ENCODE measurements at regions of chr10 and their contacts with region 1.

Region 1: DNA sequence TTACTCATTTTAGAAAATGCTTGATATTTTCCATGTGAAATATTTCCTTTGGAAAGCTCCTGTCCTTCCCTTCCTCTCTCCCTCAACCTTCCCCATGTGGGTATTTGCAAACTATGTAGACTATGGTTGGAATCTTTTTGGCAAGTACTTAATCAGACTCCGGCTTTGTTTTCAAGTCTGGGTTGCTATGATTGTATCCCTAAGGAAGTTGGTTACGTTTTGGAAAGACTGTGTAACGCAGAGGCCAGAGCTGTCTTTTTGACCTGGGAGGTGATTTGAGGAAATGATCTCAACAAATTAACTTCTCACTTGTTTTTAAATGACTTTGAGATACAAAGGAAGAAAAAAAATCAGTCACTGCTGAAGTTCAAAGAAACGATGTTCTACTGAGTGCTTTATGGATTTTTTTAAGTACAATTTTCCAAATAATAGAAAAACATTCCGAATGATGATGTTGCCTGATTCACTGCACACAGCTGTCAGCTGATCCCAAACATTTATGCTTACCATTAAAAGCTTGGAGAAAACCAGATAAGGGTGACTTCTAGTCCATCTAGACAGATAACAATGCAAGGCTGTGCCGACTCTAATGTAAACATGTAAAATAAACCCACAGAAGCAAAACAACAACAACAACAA is 145.5 kb upstream of the CELF2 start:
- DNase-seq: no peak
- ATAC-seq: no peak
- H3K4me3 ChIP-seq: no peak overlapping the region
- H3K4me3 Mint-ChIP-seq: no peak overlapping the region
- H3K27ac ChIP-seq: no peak overlapping the region
- H3K27ac Mint-ChIP-seq: no peak overlapping the region
- H3K4me1 ChIP-seq: no peaks in the 10 kb centered on the region
- H3K4me1 Mint-ChIP-seq: no peaks in the 10 kb centered on the region
- H3K27me3 ChIP-seq: peaks cover 0 to 4% of the 10 kb centered on the region in 2 donors
- H3K27me3 Mint-ChIP-seq: peaks cover 18 to 44% (median 27%) of the 10 kb centered on the region in 5 donors

Region 2: DNA sequence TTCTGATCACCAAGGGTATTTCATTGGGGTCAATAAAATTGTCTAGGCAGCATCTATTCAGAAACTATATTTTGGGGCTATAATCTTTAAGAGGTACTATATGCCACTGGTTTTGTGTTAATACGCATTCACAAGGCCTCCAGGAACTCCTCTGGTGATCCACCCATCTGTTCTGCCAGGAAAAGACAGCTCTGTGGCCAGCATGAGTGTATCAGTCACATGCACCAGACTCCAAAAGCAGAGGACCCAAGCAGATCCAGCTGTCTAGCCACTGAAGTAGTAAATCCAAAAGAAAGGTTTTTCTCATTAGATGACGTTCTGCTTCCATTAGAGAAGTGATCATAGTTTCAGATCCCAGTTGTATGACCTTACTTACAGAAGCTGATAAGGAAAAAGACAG is 54.1 kb before region 1 on chr10:
- CTCF ChIA-PET with region 1: interaction called, 3 read pairs
- POLR2A ChIA-PET with region 1: no interaction called
- intact Hi-C with region 1: loop called in 1 of 2 experiments (anchors 10 kb)
- DNase-seq: no peak
- ATAC-seq: no peak
- H3K4me3 ChIP-seq: no peak overlapping the region
- H3K4me3 Mint-ChIP-seq: no peak overlapping the region
- H3K27ac ChIP-seq: no peak overlapping the region
- H3K27ac Mint-ChIP-seq: no peak overlapping the region
- H3K4me1 ChIP-seq: no peaks in the 10 kb centered on the region
- H3K4me1 Mint-ChIP-seq: peaks cover 0 to 7% (median 3%) of the 10 kb centered on the region in 7 donors
- H3K27me3 ChIP-seq: peaks cover 0 to 1% of the 10 kb centered on the region in 2 donors
- H3K27me3 Mint-ChIP-seq: peaks cover 0 to 17% (median 4%) of the 10 kb centered on the region in 5 donors

Region 3: DNA sequence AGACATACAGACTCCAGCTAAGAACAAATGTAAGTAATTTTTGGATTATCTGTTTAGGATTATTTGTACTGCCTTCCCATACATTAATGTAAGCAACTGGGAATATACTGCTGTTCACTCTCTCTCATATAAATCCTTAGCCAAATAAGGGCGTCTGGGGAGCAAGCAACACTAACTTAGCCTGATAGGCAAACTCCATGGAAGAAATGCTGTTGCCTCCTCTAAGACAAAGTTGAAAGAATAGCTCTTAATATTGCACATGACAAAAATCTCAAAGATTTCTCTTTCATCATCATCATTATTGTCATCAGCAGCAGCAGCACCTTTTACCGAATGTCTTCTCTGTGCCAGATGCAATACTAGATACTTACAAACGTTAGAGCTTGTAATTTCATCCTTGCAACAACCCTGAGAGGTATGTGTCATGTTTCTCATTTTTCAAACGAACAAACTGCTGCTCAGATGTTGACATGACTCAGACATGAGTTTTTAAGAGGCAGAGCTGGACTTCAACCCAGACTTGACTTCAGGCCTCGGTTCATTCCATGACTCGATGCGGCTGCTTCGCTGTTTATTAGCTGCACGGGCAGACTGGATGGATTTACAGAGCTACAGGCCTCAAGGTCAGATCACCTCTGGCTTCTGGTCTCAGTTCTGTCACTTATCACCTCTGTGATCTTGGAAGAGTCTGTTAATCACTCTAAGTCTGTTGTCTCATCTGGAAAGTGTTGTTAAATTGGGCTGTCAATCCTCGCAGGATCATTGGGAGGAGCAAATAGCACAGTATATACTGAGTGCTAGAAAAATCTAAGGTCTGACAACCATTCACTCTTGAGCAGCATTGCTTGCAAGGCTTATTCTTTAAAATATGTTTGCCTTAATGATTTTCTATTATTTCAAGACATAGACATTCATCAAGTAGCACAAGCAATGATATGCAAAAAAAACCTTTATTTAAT is 19.2 kb after region 1 on chr10:
- CTCF ChIA-PET with region 1: no interaction called
- POLR2A ChIA-PET with region 1: no interaction called
- intact Hi-C with region 1: no loop called
- DNase-seq: no peak
- ATAC-seq: no peak
- H3K4me3 ChIP-seq: no peak overlapping the region
- H3K4me3 Mint-ChIP-seq: no peak overlapping the region
- H3K27ac ChIP-seq: no peak overlapping the region
- H3K27ac Mint-ChIP-seq: no peak overlapping the region
- H3K4me1 ChIP-seq: no peaks in the 10 kb centered on the region
- H3K4me1 Mint-ChIP-seq: no peaks in the 10 kb centered on the region
- H3K27me3 ChIP-seq: no peaks in the 10 kb centered on the region
- H3K27me3 Mint-ChIP-seq: peaks cover 0 to 20% (median 5%) of the 10 kb centered on the region in 5 donors

Measured in naive thymus-derived CD4-positive, alpha-beta T cell (primary cell).